Pancreas (tissue), 10 donors: ENCODE measurements at regions of chr13 and their contacts with region 1.

Region 1: DNA sequence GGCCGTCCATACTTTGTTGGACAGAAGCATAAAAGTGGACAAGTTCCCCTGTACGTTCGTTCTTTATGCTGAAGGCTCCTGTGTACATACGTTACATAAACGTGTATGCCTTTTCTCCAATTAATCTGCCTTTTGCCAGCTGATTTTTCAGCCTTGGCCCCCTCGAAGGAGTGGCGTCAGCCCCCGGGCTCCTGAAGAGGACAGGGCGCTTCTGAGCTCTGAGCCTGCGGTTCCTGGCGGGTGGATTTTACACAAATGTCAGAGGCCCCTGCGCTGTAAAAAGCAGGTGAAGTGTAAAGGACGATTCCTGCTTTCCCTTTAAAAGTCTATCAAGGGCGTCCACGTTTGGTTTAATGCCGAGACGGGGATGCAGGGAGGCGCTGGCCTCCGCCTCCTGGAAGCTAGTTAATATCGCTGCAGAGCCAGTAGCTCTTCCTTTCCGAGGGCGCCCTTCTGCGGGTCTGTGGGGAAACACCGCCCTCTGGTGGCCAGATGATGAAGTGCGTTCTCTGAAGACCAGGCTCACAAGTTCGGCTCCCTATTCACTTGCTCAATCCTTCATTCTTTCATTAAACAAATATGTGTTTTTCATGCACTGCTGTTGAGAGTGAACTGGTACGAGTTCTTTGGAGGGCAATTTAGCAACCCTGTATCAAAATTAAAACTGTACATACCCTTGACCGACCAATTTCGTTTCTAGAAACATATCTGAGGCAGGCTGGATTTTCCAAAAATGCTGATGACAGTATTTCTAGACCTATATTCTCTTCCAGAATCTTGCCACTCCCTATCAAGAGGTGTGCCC is 62.0 kb downstream of the GPR12 start:
- DNase-seq: peak; percentile 52 to 94 (median 80)
- ATAC-seq: peak; percentile 94 to 100 (median 96)
- H3K4me3 ChIP-seq: no peak overlapping the region
- H3K27ac ChIP-seq: no peak overlapping the region
- H3K4me1 ChIP-seq: peaks cover 0 to 3% (median 0%) of the 10 kb centered on the region in 3 donors
- H3K27me3 ChIP-seq: no peaks in the 10 kb centered on the region
- CTCF ChIP-seq: peak; percentile 96 to 98 (median 97)

Region 2: DNA sequence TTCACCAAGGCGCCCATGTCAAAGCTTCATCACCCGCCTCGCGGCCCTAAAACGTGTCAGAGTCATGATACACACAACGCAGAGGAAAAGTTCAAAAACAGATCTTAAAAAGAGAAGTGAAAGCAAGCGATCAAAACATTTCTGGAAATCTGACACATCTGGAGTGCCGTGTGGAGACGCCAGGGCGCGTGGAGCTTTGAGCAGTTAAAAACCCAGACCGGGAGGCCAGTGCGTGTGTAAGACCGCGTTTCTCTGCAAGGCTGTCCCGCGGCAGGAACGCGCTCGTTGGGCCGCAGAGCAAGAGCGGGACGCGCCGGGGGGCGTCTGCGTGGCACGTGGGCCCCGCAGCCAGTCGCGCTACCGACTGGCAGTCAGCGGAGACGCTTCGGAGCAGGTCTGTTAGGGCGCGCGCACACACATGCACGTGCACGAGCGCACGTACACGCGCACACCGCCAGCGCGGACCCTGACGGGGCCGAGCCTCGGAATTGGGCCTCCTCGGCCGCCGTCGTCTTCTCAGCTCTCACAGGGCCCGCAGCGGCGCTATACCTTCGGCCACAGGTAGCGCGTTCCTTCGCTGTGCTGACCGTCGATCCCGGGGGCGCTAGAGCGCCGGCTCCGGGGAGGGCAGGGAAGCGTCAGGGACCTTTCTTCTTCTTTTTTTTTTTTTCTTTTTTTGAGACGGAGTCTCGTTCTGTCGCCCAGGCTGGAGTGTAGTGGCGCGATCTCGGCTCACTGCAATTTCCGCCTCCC is 512.3 kb before region 1 on chr13:
- intact Hi-C with region 1: loop called in 2 of 3 experiments (anchors 5 to 10 kb)
- DNase-seq: peak; percentile 90 to 96 (median 91)
- ATAC-seq: peak; percentile 96 to 98 (median 97)
- H3K4me3 ChIP-seq: peak overlapping the region; percentile 42 to 75 (median 55)
- H3K27ac ChIP-seq: peak overlapping the region; percentile 64 to 89 (median 80)
- H3K4me1 ChIP-seq: no peaks in the 10 kb centered on the region
- H3K27me3 ChIP-seq: no peaks in the 10 kb centered on the region
- CTCF ChIP-seq: peak in 3 of 4 donors; percentile 17 to 32 (median 25)

Region 3: GRCh38 chr13:26482451-26483197 is 216.0 kb before region 1 on chr13:
- intact Hi-C with region 1: loop called in 2 of 3 experiments (anchors 5 kb)
- DNase-seq: peak in 4 of 6 donors; percentile 36 to 74 (median 40)
- ATAC-seq: peak; percentile 70 to 90 (median 88)
- H3K4me3 ChIP-seq: peak overlapping the region in 1 of 4 donors; percentile 26
- H3K27ac ChIP-seq: no peak overlapping the region
- H3K4me1 ChIP-seq: no peaks in the 10 kb centered on the region
- H3K27me3 ChIP-seq: no peaks in the 10 kb centered on the region
- CTCF ChIP-seq: peak; percentile 78 to 90 (median 85)

Region 4: GRCh38 chr13:26529441-26529840 is 169.2 kb before region 1 on chr13:
- intact Hi-C with region 1: no loop called
- DNase-seq: peak in 1 of 6 donors; percentile 20
- ATAC-seq: peak in 2 of 4 donors; percentile 41 to 64
- H3K4me3 ChIP-seq: no peak overlapping the region
- H3K27ac ChIP-seq: no peak overlapping the region
- H3K4me1 ChIP-seq: no peaks in the 10 kb centered on the region
- H3K27me3 ChIP-seq: peaks cover 0 to 2% (median 0%) of the 10 kb centered on the region in 4 donors
- CTCF ChIP-seq: no peak

Region 5: GRCh38 chr13:26601669-26602068 is 96.9 kb before region 1 on chr13:
- intact Hi-C with region 1: no loop called
- DNase-seq: no peak
- ATAC-seq: peak in 1 of 4 donors; percentile 20
- H3K4me3 ChIP-seq: no peak overlapping the region
- H3K27ac ChIP-seq: no peak overlapping the region
- H3K4me1 ChIP-seq: peaks cover 0 to 3% (median 0%) of the 10 kb centered on the region in 3 donors
- H3K27me3 ChIP-seq: no peaks in the 10 kb centered on the region
- CTCF ChIP-seq: no peak